MCF 10A (cell line): ENCODE measurements at regions of chr1 and their contacts with region 1.

Region 1: DNA sequence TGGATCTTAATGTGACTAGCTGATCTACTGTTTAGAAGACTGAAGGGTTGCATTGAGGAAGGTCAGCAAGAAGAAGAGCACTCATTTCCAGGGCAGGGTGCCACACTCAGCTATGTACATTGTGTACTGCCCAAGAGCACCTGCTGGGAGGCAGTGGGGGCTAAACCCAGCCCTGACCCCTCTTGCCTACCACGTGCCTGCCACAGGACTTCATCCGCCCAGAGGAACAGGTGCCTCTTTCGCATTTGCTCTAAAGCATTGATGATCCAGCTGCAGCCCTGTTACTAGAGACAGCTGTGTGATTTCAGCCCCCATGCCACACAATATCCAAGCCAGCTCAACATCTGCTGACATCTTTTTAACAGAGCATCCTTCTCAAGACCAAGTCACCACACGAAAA is 341.8 kb downstream of the LMX1A start:
- DNase-seq: no peak
- H3K4me3 Mint-ChIP-seq: no peak overlapping the region
- H3K27ac Mint-ChIP-seq: no peak overlapping the region
- H3K4me1 Mint-ChIP-seq: no peaks in the 10 kb centered on the region
- H3K27me3 Mint-ChIP-seq: no peaks in the 10 kb centered on the region
- CTCF ChIP-seq: no peak

Region 2: GRCh38 chr1:164905869-164906268 is 108.9 kb before region 1 on chr1:
- CTCF ChIA-PET with region 1: no interaction called
- POLR2A ChIA-PET with region 1: no interaction called
- intact Hi-C with region 1: no loop called
- DNase-seq: no peak
- H3K4me3 Mint-ChIP-seq: no peak overlapping the region
- H3K27ac Mint-ChIP-seq: no peak overlapping the region
- H3K4me1 Mint-ChIP-seq: no peaks in the 10 kb centered on the region
- H3K27me3 Mint-ChIP-seq: no peaks in the 10 kb centered on the region
- CTCF ChIP-seq: no peak

Region 3: GRCh38 chr1:164983023-164983650 is 31.6 kb before region 1 on chr1:
- CTCF ChIA-PET with region 1: no interaction called
- POLR2A ChIA-PET with region 1: no interaction called
- intact Hi-C with region 1: no loop called
- DNase-seq: no peak
- H3K4me3 Mint-ChIP-seq: no peak overlapping the region
- H3K27ac Mint-ChIP-seq: no peak overlapping the region
- H3K4me1 Mint-ChIP-seq: no peaks in the 10 kb centered on the region
- H3K27me3 Mint-ChIP-seq: peaks cover 2% of the 10 kb centered on the region
- CTCF ChIP-seq: no peak

Region 4: GRCh38 chr1:165045902-165046301 is 31.1 kb after region 1 on chr1:
- CTCF ChIA-PET with region 1: interaction called, 12 read pairs
- POLR2A ChIA-PET with region 1: no interaction called
- intact Hi-C with region 1: no loop called
- DNase-seq: no peak
- H3K4me3 Mint-ChIP-seq: no peak overlapping the region
- H3K27ac Mint-ChIP-seq: no peak overlapping the region
- H3K4me1 Mint-ChIP-seq: peaks cover 7% of the 10 kb centered on the region
- H3K27me3 Mint-ChIP-seq: peaks cover 21% of the 10 kb centered on the region
- CTCF ChIP-seq: no peak